ENCODE measurements at regions of chr5 and their contacts with region 1.

Region 1: DNA sequence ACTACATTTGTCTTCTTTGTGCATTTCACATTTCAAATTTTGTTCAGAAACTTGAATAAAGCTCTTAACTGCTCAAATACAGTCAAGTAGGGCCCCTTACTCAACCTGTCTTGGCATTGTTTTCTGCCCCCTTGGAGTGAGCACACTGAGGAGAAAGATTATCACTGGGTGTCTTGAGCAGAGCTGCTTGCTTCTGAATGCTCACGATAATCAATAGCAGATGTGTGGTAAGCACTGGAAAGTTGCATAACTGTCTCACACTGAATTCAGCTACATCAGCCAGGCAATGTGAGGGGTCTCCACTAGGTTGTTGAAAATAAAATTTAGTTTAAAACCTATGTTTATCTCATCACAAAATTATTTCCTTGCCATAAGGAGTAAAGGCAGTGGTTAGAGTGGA is 7.8 kb upstream of the TNFAIP8 start:
- DNase-seq: no peak
- ATAC-seq: no peak
- H3K4me3 ChIP-seq: no peak overlapping the region
- H3K4me3 Mint-ChIP-seq: peak overlapping the region; percentile 11
- H3K27ac ChIP-seq: no peak overlapping the region
- H3K27ac Mint-ChIP-seq: peak overlapping the region; percentile 86
- H3K4me1 ChIP-seq: peaks cover 73% of the 10 kb centered on the region
- H3K4me1 Mint-ChIP-seq: peaks cover 96% of the 10 kb centered on the region
- H3K27me3 ChIP-seq: no peaks in the 10 kb centered on the region
- H3K27me3 Mint-ChIP-seq: no peaks in the 10 kb centered on the region
- CTCF ChIP-seq: no peak

Region 2: GRCh38 chr5:119389288-119390030 is 41.5 kb after region 1 on chr5:
- CTCF ChIA-PET with region 1: interaction called, 3 read pairs
- POLR2A ChIA-PET with region 1: no interaction called
- intact Hi-C with region 1: loop called (anchors 5 kb)
- DNase-seq: no peak
- ATAC-seq: no peak
- H3K4me3 ChIP-seq: no peak overlapping the region
- H3K4me3 Mint-ChIP-seq: no peak overlapping the region
- H3K27ac ChIP-seq: peak overlapping the region in 1 of 2 donors; percentile 30
- H3K27ac Mint-ChIP-seq: peak overlapping the region; percentile 80
- H3K4me1 ChIP-seq: peaks cover 29% of the 10 kb centered on the region
- H3K4me1 Mint-ChIP-seq: peaks cover 85% of the 10 kb centered on the region
- H3K27me3 ChIP-seq: no peaks in the 10 kb centered on the region
- H3K27me3 Mint-ChIP-seq: no peaks in the 10 kb centered on the region
- CTCF ChIP-seq: no peak

Region 3: GRCh38 chr5:120576588-120576987 is 1228.6 kb after region 1 on chr5:
- CTCF ChIA-PET with region 1: no interaction called
- POLR2A ChIA-PET with region 1: no interaction called
- intact Hi-C with region 1: no loop called
- DNase-seq: no peak
- ATAC-seq: no peak
- H3K4me3 ChIP-seq: no peak overlapping the region
- H3K4me3 Mint-ChIP-seq: no peak overlapping the region
- H3K27ac ChIP-seq: no peak overlapping the region
- H3K27ac Mint-ChIP-seq: no peak overlapping the region
- H3K4me1 ChIP-seq: no peaks in the 10 kb centered on the region
- H3K4me1 Mint-ChIP-seq: no peaks in the 10 kb centered on the region
- H3K27me3 ChIP-seq: no peaks in the 10 kb centered on the region
- H3K27me3 Mint-ChIP-seq: no peaks in the 10 kb centered on the region
- CTCF ChIP-seq: no peak